Panc1 (cell line): ENCODE measurements at regions of chr1 and their contacts with region 1.

Region 1: DNA sequence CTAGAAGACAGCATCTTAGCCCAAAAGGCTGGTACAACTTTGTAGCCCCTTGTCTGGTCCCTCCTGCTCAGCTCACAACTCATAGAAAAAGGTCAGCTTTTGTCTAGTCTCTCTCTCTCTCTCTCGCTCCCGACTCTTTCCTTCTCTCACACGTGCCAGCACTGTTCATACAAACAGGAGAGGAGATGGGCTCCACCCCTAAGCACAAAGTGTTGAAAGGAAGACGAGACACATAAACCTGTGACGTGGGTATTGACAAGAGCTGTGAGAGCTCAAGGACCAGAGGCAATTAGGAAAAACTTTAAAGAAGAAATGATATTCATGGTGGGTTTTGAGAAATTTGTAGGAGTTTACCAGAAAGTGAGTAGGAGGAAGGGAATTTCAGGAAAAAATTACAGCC is 23.6 kb upstream of the KCNC4 start:
- DNase-seq: no peak
- ATAC-seq: no peak
- H3K4me3 ChIP-seq: no peak overlapping the region
- H3K27ac ChIP-seq: no peak overlapping the region
- H3K4me1 ChIP-seq: peaks cover 5% of the 10 kb centered on the region
- H3K27me3 ChIP-seq: no peaks in the 10 kb centered on the region
- CTCF ChIP-seq: no peak

Region 2: DNA sequence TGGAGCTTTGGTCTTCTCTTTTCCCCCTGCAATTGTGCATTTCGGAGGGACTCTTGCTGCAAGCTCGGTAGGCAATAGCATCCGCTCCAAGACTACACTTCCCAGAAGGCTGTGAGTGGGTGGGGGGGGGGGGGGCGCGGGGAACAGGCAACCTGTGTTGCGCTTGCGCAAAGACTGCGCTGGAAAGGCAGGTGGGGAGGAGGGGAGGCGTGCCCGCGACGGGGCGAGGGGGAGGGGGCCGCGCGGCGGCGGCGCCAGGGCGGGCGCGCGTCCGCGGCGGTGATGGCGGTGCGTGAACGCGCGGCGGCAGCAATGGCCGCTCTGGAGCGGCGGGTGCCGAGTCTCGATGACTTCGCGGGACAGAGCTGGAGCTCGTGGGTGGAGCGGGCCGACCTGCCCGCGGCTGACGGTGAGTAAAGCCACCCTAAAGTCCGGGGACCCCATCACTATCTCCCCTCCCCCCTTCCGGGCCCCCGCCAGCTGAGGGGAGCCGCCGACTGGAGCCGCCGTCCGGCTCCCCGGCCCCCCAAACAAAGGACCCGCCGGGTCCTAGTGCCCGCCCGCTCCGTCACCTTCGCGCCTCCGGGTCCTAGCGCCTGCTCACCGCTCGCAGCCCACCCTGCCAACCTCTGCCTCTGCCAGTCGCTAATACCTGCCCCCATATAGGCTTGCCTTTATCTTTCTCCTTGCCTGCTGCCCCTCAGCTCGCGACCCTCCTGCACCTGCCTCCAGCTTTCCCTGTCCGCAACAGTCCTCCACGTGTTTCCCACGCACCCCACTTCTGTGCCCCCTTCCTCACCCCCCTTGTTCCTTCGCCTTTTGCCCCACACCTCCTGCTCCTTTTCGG is 702.7 kb before region 1 on chr1 and contains the start of gene ATXN7L2:
- CTCF ChIA-PET with region 1: no interaction called
- POLR2A ChIA-PET with region 1: no interaction called
- in situ Hi-C with region 1: no loop called
- intact Hi-C with region 1: no loop called
- DNase-seq: peak; percentile 51
- ATAC-seq: peak; percentile 89
- H3K4me3 ChIP-seq: peak within 1 kb of the TSS; percentile 69 to 81
- H3K27ac ChIP-seq: peak within 1 kb of the TSS; percentile 70
- H3K4me1 ChIP-seq: peaks cover 3% of the 10 kb centered on the region; the same call in 1 of the 2 replicates
- H3K27me3 ChIP-seq: no peaks in the 10 kb centered on the region
- CTCF ChIP-seq: no peak
- total RNA-seq, gene ATXN7L2: 4.9 TPM

Region 3: DNA sequence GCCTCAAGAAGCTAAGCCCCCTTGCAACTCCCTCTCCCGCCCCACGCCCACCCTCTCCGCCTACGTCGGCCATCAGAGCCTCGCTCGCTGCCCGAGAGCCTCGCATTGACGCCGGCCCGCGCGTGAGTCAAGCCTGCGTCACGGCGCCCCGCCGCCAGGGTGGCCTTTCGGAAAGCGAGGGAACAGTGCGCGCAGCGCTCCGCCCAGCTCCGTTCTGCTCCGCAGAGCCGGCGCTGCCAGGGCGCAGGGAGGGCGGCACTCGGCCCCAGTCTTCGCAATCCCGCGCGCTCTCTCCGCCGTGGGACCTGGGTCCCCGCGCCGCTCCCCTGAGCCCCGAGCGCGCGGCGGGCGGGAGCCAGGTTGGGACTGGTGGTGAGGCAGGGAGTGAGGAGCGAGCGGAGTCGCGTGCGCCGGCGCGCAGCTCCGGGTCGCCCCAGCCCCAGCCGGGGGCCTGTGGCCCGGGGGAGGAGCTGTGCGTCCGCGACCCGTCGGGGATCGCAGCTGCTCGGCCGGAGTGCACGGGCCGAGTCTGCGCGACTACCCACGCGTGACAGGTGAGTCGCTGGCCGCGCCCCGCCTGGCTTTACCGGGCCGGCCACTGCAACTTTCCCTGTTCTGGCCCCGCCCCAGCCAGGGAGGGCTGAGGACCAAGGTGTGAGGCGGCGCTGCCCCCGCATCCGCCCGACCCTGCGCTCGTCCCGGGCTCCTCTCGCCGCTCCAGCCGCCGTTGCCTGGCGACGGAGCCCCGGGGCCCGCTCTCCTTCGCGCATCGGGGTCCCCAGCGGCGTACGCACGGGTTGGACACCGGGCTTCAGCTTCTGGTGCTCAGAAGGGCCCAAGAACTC is 36.0 kb before region 1 on chr1 and contains the start of gene SLC6A17:
- CTCF ChIA-PET with region 1: interaction called, 13 read pairs
- POLR2A ChIA-PET with region 1: no interaction called
- in situ Hi-C with region 1: no loop called
- intact Hi-C with region 1: no loop called
- DNase-seq: no peak
- ATAC-seq: peak; percentile 97
- H3K4me3 ChIP-seq: peak within 1 kb of the TSS; percentile 45 to 50
- H3K27ac ChIP-seq: no peak within 1 kb of the TSS
- H3K4me1 ChIP-seq: no peaks in the 10 kb centered on the region
- H3K27me3 ChIP-seq: peaks cover 9% of the 10 kb centered on the region
- CTCF ChIP-seq: no peak
- total RNA-seq, gene SLC6A17: 5.7 TPM